HEK293 (cell line): ENCODE measurements at regions of chr4 and their contacts with region 1.

Region 1: GRCh38 chr4:185096032-185096653 is 46.9 kb upstream of the SLC25A4 start:
- H3K4me3 ChIP-seq: no peak overlapping the region
- H3K27ac ChIP-seq: no peak overlapping the region
- H3K4me1 ChIP-seq: no peaks in the 10 kb centered on the region
- CTCF ChIP-seq: 0 out of 2 replicates have a peak, but pooled peaks have one; percentile 22

Region 2: DNA sequence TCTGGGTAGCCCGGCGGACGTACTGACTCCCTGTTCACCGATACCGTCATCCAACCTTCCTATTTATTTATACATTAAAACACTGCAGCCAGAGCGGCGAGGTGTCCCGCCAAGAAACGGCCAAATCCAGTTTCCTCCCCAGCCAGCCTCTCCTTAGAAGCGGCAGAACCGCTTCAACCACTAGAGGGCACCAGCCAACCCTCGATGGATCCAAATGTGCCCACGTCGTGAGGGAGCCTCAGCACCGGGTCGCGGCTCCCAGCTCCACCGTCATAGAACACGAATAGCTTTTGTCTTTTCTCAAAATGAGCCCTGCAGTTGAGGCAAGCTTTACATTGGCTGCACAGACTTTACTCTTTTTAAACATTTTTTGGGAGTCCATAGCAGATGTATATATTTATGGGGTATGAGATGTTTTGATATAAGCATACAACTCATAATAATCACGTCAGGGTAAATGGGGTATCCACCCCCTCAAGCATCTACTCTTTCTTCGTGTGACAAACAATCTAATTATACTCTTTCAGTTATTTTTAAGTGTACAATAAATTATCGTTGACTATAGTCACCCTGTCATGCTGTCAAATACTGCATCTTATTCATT is 90.8 kb before region 1 on chr4:
- CTCF ChIA-PET with region 1: interaction called, 38 read pairs
- POLR2A ChIA-PET with region 1: no interaction called
- H3K4me3 ChIP-seq: no peak overlapping the region
- H3K27ac ChIP-seq: no peak overlapping the region
- H3K4me1 ChIP-seq: no peaks in the 10 kb centered on the region
- CTCF ChIP-seq: peak; percentile 74

Region 3: DNA sequence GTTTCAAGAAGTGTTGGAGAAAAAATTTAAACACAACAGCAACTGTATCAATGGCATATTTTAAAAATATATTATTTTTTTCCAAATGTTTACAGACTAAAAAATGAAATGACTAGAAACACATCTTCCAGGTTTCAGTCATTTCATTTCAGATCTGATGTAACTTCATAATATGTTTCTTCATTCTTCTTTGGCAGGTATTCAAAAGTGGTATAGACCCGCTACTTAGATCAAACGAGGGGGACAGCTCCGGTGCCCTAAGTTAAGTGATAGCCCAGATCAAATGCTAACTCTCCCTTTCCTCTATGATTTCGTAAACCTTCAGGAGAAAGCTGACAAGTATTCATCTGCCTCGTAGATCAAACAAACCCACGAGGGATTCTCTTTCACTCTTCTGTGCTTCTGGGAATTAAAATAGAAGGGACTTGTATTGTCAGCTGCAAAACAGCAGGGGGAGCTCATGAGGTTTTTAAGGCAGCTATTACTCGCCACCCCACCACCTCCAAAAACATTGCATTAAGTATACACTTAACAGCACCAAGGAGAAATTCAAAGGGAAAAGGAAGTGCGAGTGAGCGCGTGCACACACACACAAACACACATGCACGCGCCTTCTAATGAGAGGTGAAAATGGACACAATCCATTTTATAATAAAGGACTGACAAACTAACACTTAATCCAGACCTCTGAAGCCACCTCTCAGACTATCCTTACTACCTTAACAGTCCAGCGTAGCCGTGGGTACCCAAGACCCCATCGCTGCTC is 56.5 kb before region 1 on chr4:
- CTCF ChIA-PET with region 1: interaction called, 69 read pairs
- POLR2A ChIA-PET with region 1: no interaction called
- H3K4me3 ChIP-seq: no peak overlapping the region
- H3K27ac ChIP-seq: no peak overlapping the region
- H3K4me1 ChIP-seq: no peaks in the 10 kb centered on the region
- CTCF ChIP-seq: no peak

Region 4: DNA sequence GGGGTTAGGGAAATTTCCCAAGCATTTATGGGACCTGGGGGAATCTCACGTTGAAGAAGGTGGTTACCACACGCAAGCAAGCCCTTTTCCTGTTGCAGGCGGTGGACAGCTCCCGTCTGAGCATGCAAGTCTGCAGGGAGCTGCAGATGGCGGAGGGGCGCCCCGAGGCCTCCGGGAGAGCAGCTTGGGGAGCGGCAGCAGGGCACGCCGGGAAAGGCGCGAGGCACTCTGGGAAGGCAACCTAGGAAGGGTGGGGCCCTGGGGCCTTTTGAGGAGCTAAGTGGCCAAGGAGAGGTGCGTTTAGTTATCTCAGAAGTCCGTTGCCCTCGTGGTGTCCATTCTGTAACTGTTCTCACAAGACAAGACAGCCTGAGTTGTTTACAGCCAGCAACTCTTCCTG is 10.1 kb before region 1 on chr4:
- CTCF ChIA-PET with region 1: interaction called, 12 read pairs
- POLR2A ChIA-PET with region 1: no interaction called
- H3K4me3 ChIP-seq: no peak overlapping the region
- H3K27ac ChIP-seq: no peak overlapping the region
- H3K4me1 ChIP-seq: no peaks in the 10 kb centered on the region
- CTCF ChIP-seq: no peak

Region 5: GRCh38 chr4:185134307-185134869 is 38.2 kb after region 1 on chr4:
- CTCF ChIA-PET with region 1: interaction called, 11 read pairs
- POLR2A ChIA-PET with region 1: interaction called, 8 read pairs
- H3K4me3 ChIP-seq: no peak overlapping the region
- H3K27ac ChIP-seq: no peak overlapping the region
- H3K4me1 ChIP-seq: no peaks in the 10 kb centered on the region
- CTCF ChIP-seq: no peak